Activated CD4-positive, alpha-beta T cell treated with anti-CD3 and anti-CD28 coated beads, Interleukin-2, amount 10 ng/mL, durations not matched to agents 24 days and 14 days (primary cell): ENCODE measurements at regions of chr3 and their contacts with region 1.

Region 1: GRCh38 chr3:47380601-47381316 is at the start of gene PTPN23:
- DNase-seq: peak; percentile 100
- H3K4me3 Mint-ChIP-seq: peak within 1 kb of the TSS; percentile 95
- H3K27ac Mint-ChIP-seq: peak within 1 kb of the TSS; percentile 100
- H3K4me1 Mint-ChIP-seq: peaks cover 35% of the 10 kb centered on the region
- H3K27me3 Mint-ChIP-seq: peaks cover 2% of the 10 kb centered on the region
- total RNA-seq, gene PTPN23: 34.1 and 34.6 TPM in 2 replicates

Region 2: GRCh38 chr3:46619845-46620778 is 760.6 kb before region 1 on chr3:
- intact Hi-C with region 1: no loop called
- DNase-seq: no peak
- H3K4me3 Mint-ChIP-seq: no peak overlapping the region
- H3K27ac Mint-ChIP-seq: no peak overlapping the region
- H3K4me1 Mint-ChIP-seq: no peaks in the 10 kb centered on the region
- H3K27me3 Mint-ChIP-seq: peaks cover 42% of the 10 kb centered on the region

Region 3: DNA sequence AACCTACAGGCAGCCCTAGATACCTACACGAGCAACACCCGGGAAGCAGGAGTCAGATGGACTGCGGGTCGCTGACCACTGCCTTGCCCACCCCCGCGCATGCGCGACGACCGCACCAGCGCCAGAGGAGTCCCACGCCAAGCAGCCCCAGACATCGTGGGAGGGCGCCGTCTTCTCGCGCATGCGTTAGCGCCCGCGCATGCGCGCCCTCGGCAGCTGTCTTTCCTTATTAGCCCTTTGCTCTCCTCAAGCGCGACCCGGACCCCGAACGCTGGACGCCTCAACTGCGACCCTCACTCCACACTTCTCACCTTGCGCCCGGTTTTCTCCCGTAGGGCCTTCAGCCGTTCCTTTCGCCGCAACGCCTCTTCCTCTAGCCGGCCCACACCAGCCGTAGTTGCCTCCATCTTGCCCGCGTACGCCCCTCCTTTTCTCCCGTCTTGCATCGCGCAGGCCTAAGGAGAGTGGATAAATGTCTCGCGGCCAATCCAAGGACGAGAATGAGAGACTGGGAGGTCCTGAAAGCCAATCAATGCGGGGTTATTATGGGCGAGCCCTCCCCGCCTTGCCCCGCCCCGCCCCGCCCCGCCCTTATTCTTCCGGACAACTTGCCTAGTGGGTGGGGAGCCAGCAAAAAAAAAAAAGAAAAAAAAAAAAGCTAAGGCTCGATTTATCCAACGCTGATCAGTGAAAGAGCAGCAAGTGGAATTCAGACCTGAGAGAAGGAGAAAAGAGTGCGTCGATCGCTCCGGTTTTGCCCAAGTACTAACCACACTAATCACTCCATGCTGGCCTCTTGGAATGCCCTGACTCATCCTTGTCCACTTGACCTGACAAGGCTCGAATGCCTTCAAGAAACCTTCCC is 404.2 kb before region 1 on chr3 and contains the start of gene CCDC12:
- intact Hi-C with region 1: loop called (anchors 1 kb)
- DNase-seq: peak; percentile 98
- H3K4me3 Mint-ChIP-seq: peak within 1 kb of the TSS; percentile 98
- H3K27ac Mint-ChIP-seq: peak within 1 kb of the TSS; percentile 99
- H3K4me1 Mint-ChIP-seq: peaks cover 55% of the 10 kb centered on the region
- H3K27me3 Mint-ChIP-seq: peaks cover 2% of the 10 kb centered on the region
- total RNA-seq, gene CCDC12: 55.3 and 66.2 TPM in 2 replicates

Region 4: DNA sequence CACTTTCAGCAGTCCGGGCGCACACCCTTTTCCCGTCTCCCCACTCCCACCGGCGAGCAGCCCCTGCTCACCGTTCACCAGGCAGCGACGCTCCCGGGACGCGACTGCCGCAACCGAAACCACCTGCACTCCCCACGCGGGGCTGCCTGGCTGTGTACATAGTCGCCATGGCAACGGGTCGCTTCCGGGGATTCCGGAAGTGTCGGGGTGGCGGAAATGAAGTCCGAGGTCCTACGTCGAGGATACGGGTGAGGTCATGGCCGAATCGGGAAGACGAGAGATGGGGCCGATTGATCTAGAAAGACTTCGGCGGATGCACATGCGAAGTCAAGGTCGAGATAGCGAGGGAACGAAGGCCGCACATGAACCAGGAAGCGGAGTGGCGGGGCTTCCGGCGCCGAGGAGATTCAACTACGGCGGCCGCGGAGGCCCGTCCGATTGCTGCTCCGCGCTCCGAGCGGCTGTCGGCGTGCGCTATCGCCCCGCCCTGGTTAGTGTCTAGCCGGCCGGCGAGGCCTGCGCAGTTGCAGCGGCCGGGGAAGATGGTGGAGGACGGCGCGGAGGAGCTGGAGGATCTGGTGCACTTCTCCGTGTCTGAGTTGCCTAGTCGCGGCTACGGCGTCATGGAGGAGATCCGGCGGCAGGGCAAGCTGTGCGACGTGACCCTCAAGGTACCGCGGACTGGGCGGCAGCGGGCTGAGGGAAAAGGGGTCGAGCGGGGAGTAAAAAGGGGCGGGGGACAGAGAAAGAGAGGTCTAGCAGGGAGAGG is 98.2 kb before region 1 on chr3 and contains the starts of genes KIF9 and KLHL18:
- intact Hi-C with region 1: loop called (anchors 1 kb)
- DNase-seq: peak; percentile 98
- H3K4me3 Mint-ChIP-seq: peak within 1 kb of the TSS; percentile 100
- H3K27ac Mint-ChIP-seq: peak within 1 kb of the TSS; percentile 100
- H3K4me1 Mint-ChIP-seq: peaks cover 29% of the 10 kb centered on the region
- H3K27me3 Mint-ChIP-seq: peaks cover 3% of the 10 kb centered on the region
- total RNA-seq, gene KIF9: 3.0 and 3.6 TPM in 2 replicates
- total RNA-seq, gene KLHL18: 47.0 and 49.3 TPM in 2 replicates

Region 5: DNA sequence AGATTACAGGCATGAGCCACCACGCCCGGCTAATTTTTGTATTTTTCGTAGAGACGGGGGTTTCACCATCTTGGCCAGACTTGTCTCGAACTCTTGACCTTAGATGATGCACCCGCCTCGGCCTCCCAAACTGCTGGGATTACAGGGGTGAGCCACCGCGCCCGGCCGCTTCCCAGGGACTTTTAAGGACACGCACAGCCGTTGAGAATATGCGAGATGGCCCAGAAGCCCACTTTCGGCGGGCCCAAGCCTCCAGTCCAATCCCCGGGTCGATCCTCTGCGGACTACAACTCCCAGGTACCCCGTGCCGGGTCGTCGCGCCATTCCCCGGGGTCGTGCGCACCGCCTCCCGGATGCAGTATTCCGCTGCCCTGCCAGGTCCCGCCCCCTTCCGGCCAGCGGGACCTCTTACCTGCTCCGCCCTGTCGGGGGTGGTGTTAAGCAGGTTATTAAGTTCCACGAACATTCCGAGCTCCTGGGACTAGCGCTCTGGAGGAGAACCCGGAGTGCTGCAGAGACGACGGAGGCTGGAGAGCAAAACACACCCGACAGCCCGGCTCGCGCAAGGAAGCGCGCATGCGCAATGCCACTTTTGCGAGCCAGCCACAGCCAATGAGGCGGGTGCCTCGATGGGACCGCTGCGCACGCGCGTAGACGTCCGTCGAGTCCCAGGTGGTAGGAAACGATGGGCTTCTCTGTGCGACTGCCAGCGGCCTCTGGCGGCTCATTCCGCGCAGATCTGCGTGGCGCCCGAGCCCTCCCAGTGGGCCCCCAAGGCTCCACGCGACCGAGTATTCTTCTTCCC is 132.6 kb after region 1 on chr3 and contains the start of gene ELP6:
- intact Hi-C with region 1: loop called (anchors 1 kb)
- DNase-seq: peak; percentile 99
- H3K4me3 Mint-ChIP-seq: peak within 1 kb of the TSS; percentile 98
- H3K27ac Mint-ChIP-seq: peak within 1 kb of the TSS; percentile 98
- H3K4me1 Mint-ChIP-seq: peaks cover 17% of the 10 kb centered on the region
- H3K27me3 Mint-ChIP-seq: peaks cover 13% of the 10 kb centered on the region
- total RNA-seq, gene ELP6: 45.9 and 49.7 TPM in 2 replicates

Region 6: GRCh38 chr3:47565734-47566550 is 185.2 kb after region 1 on chr3:
- intact Hi-C with region 1: no loop called
- DNase-seq: no peak
- H3K4me3 Mint-ChIP-seq: no peak overlapping the region
- H3K27ac Mint-ChIP-seq: no peak overlapping the region
- H3K4me1 Mint-ChIP-seq: no peaks in the 10 kb centered on the region
- H3K27me3 Mint-ChIP-seq: peaks cover 7% of the 10 kb centered on the region

Region 7: GRCh38 chr3:47802734-47803477 is 422.1 kb after region 1 on chr3 and contains the start of gene DHX30:
- intact Hi-C with region 1: loop called (anchors 1 kb)
- DNase-seq: peak; percentile 96
- H3K4me3 Mint-ChIP-seq: peak within 1 kb of the TSS; percentile 99
- H3K27ac Mint-ChIP-seq: peak within 1 kb of the TSS; percentile 96
- H3K4me1 Mint-ChIP-seq: peaks cover 19% of the 10 kb centered on the region
- H3K27me3 Mint-ChIP-seq: no peaks in the 10 kb centered on the region
- total RNA-seq, gene DHX30: 143 and 149 TPM in 2 replicates